ENCODE measurements at regions of chr16 and their contacts with region 1.

Region 1: DNA sequence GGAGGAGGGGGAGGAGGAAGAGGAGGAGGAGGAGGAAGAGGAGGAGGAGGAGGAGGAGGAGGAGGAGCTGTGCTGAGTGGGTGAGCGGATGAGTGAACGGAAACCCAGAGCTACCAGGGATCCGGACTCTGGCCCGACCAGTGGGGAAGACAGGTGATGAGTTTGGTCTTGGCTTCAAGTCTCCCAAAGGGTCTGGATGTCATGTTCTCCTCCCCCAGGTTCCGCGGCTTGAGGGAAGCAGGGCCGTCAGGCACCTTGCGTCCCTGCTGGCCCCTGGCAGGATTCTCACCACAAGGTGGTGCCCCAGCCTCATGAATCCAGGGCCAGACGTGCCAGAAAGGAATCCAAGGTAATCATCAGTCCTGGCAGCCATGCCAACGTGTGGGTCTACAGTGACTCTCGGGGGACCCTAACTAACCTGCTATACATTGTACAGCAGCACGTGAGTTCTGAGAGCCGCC is 13.5 kb upstream of the ABAT start:
- DNase-seq: peak; percentile 53 to 74
- ATAC-seq: peak; percentile 73 to 90 (median 83)
- H3K4me3 ChIP-seq: no peak overlapping the region
- H3K27ac ChIP-seq: no peak overlapping the region
- H3K4me1 ChIP-seq: no peaks in the 10 kb centered on the region
- H3K27me3 ChIP-seq: no peaks in the 10 kb centered on the region
- CTCF ChIP-seq: peak; percentile 62

Region 2: DNA sequence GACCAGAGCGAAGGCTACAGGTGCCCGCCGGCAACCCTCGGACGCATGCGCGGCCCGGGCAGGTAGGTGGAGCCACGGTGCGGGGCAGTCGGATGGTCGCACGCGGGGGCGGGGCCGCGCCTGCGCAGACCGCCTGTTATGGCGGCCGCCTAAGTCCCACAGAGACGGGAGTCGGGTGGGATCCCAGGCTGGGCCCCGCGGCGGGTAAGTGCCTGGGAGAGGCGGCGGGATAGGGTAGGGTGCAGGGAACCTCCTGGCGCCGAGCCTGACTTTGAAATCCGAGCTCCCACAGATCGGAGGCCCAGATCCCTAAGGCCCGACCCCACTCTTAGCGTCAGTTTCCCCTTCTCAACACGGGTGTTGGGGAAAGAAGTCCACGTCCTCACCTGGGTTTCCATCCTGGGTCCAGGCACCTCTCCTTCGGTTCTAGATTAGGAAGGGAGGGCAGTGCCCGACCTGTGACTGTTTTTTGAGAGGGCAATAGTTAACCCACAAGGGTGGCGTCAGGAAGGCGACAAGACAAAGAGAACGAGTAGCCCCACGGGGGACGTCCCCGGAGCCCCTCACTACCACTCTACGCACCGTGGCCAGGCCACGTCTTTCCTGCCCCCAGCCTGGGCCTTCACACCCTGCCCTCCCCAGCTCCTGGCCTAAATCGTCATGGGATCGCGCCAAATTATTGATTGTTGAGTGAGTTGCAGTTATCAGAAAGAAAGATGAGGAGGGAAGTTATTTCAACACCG is 39.1 kb before region 1 on chr16 and contains the start of gene METTL22:
- intact Hi-C with region 1: no loop called
- DNase-seq: peak; percentile 92 to 96
- ATAC-seq: peak; percentile 96 to 98 (median 97)
- H3K4me3 ChIP-seq: peak within 1 kb of the TSS; percentile 85
- H3K27ac ChIP-seq: peak within 1 kb of the TSS; percentile 94
- H3K4me1 ChIP-seq: peaks cover 18% of the 10 kb centered on the region
- H3K27me3 ChIP-seq: no peaks in the 10 kb centered on the region
- CTCF ChIP-seq: no peak
- total RNA-seq, gene METTL22: 66.4 to 85.9 (median 74.8) TPM

Region 3: DNA sequence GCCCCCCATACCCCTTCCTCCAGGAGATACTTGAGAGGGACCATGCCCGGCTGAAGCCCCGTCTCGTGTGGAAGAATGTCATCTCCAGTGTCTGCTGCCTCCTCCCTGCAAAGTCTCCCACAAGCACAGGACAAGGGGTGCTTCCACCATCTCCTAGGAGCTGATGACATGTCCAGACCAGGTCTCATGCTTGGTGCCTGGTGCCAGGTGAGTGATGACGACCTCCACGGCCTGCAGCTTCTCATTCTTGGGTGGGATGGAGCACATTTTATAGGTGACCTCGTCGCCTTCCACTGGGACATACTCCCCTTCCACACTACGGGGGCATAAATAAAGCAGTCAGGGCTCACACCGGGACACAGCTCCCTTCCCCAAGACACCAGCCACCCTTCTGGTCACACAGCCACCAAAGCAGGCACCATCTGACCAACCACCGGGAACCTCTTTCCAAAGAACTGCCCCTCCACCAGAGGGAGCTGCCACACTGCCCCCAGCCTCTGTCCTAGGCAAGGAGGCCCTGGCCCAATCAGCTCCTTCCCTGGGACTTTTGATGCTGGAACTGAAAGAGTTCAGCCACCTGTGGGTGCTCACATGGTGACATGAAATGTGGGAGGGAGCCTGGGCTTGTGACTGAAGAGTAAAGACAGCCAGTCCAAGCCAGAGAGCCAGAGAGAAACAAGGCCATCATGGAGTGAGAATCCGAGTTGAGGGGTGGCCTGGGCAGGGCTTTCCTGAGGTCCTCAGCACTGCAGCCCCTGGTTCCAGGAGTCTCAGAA is 194.3 kb after region 1 on chr16:
- intact Hi-C with region 1: no loop called
- DNase-seq: no peak
- ATAC-seq: no peak
- H3K4me3 ChIP-seq: no peak overlapping the region
- H3K27ac ChIP-seq: no peak overlapping the region
- H3K4me1 ChIP-seq: no peaks in the 10 kb centered on the region
- H3K27me3 ChIP-seq: no peaks in the 10 kb centered on the region
- CTCF ChIP-seq: no peak

Region 4: GRCh38 chr16:8885674-8886592 is 225.1 kb after region 1 on chr16:
- intact Hi-C with region 1: loop called (anchors 2 to 5 kb)
- DNase-seq: peak; percentile 51 to 70
- ATAC-seq: peak; percentile 25 to 54 (median 42)
- H3K4me3 ChIP-seq: no peak overlapping the region
- H3K27ac ChIP-seq: peak overlapping the region; percentile 48
- H3K4me1 ChIP-seq: peaks cover 46% of the 10 kb centered on the region
- H3K27me3 ChIP-seq: peaks cover 0 to 16% (median 0%) of the 10 kb centered on the region in 3 donors
- CTCF ChIP-seq: no peak

Measured in psoas muscle (tissue), 8 donors.